ENCODE measurements at regions of chr3 and their contacts with region 1.

Region 1: GRCh38 chr3:28241221-28242160 is at the start of gene CMC1:
- DNase-seq: peak; percentile 68 to 94 (median 90)
- ATAC-seq: peak; percentile 90
- H3K4me3 ChIP-seq: peak within 1 kb of the TSS; percentile 76 to 89
- H3K4me3 Mint-ChIP-seq: peak within 1 kb of the TSS; percentile 95
- H3K27ac ChIP-seq: peak within 1 kb of the TSS; percentile 53 to 77
- H3K27ac Mint-ChIP-seq: peak within 1 kb of the TSS; percentile 92
- H3K4me1 ChIP-seq: peaks cover 29% of the 10 kb centered on the region
- H3K4me1 Mint-ChIP-seq: peaks cover 50% of the 10 kb centered on the region
- H3K27me3 ChIP-seq: no peaks in the 10 kb centered on the region
- H3K27me3 Mint-ChIP-seq: no peaks in the 10 kb centered on the region
- CTCF ChIP-seq: no peak
- total RNA-seq, gene CMC1: 28.0 to 31.0 TPM

Region 2: DNA sequence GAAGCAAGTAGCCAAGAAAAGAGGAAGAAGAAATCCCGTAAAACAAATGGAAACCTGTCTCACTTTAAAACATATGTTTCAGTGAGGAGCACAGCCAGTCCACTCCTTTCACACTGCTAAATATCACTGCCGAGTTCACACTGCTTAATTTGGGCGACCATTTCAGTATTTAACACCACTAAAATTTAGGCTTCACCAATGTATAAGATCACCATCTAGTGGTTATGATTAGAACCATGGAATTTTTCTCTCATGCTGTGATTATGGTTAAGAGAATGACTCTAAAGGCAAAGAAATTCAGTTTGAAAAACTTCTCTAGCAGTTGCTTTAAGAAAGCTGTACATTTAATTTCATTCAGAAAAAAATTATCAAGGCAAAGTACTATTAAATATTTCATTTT is 773.9 kb before region 1 on chr3:
- CTCF ChIA-PET with region 1: no interaction called
- POLR2A ChIA-PET with region 1: no interaction called
- intact Hi-C with region 1: no loop called
- DNase-seq: peak in 2 of 9 experiments; percentile 54 to 69
- ATAC-seq: peak; percentile 91
- H3K4me3 ChIP-seq: no peak overlapping the region
- H3K4me3 Mint-ChIP-seq: no peak overlapping the region
- H3K27ac ChIP-seq: no peak overlapping the region
- H3K27ac Mint-ChIP-seq: peak overlapping the region; percentile 28
- H3K4me1 ChIP-seq: peaks cover 3% of the 10 kb centered on the region
- H3K4me1 Mint-ChIP-seq: peaks cover 28% of the 10 kb centered on the region
- H3K27me3 ChIP-seq: no peaks in the 10 kb centered on the region
- H3K27me3 Mint-ChIP-seq: no peaks in the 10 kb centered on the region
- CTCF ChIP-seq: peak; percentile 60

Region 3: DNA sequence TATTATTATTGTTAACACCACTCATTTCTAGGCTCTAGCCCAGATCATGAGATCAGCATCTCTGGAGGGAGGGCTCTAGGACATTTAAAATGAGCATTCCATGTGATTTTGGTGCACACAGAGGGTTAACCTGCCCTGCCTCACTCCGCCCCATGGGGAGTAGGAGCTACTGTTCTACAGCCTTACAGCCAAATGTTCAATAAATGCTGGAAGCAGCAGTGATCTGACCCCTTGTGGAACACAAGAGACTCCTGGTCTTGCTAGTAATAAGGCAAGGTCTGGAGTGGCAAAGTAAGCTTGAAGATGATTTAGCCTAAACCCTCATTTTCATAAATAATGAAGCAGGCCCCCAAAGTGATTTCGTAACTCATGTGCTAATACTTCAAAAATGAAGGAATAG is 352.9 kb before region 1 on chr3:
- CTCF ChIA-PET with region 1: no interaction called
- POLR2A ChIA-PET with region 1: no interaction called
- intact Hi-C with region 1: no loop called
- DNase-seq: peak in 2 of 9 experiments; percentile 10 to 20
- ATAC-seq: no peak
- H3K4me3 ChIP-seq: no peak overlapping the region
- H3K4me3 Mint-ChIP-seq: no peak overlapping the region
- H3K27ac ChIP-seq: no peak overlapping the region
- H3K27ac Mint-ChIP-seq: no peak overlapping the region
- H3K4me1 ChIP-seq: peaks cover 8% of the 10 kb centered on the region
- H3K4me1 Mint-ChIP-seq: peaks cover 18% of the 10 kb centered on the region
- H3K27me3 ChIP-seq: no peaks in the 10 kb centered on the region
- H3K27me3 Mint-ChIP-seq: no peaks in the 10 kb centered on the region
- CTCF ChIP-seq: no peak

Region 4: DNA sequence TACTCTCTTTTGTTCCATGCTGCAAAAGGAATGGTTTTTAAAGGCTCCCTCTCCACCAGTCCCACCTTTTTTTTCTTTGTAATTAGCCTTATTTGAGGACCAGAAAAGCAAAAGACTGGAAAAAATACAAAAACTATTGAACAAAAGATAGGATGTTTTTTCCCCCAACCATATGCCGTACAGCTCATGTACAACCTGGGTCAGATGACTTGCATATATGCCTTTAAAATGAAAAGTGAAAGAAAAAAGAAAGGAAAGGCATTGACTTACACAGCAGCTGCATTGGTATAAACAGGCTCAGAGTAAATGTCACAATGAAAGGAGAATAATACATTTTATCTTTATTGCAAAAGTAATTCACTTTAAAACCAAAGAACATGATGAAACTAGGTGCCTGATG is 69.5 kb before region 1 on chr3:
- CTCF ChIA-PET with region 1: no interaction called
- POLR2A ChIA-PET with region 1: interaction called, 4 read pairs
- intact Hi-C with region 1: loop called in 1 of 2 experiments (anchors 1 kb)
- DNase-seq: peak in 2 of 9 experiments; percentile 32 to 57
- ATAC-seq: peak; percentile 71
- H3K4me3 ChIP-seq: peak overlapping the region in 1 of 2 experiments; percentile 38
- H3K4me3 Mint-ChIP-seq: peak overlapping the region; percentile 57
- H3K27ac ChIP-seq: peak overlapping the region; percentile 17 to 29
- H3K27ac Mint-ChIP-seq: peak overlapping the region; percentile 79
- H3K4me1 ChIP-seq: peaks cover 15% of the 10 kb centered on the region
- H3K4me1 Mint-ChIP-seq: peaks cover 17% of the 10 kb centered on the region
- H3K27me3 ChIP-seq: no peaks in the 10 kb centered on the region
- H3K27me3 Mint-ChIP-seq: no peaks in the 10 kb centered on the region
- CTCF ChIP-seq: no peak